ENCODE measurements at regions of chr12 and their contacts with region 1.

Region 1: GRCh38 chr12:14417715-14418114 is 52.2 kb downstream of the ATF7IP start:
- DNase-seq: peak; percentile 34 to 91 (median 62)
- ATAC-seq: peak; percentile 65
- H3K4me3 ChIP-seq: peak overlapping the region; percentile 33
- H3K4me3 Mint-ChIP-seq: peak overlapping the region; percentile 82
- H3K27ac ChIP-seq: peak overlapping the region; percentile 5 to 52
- H3K27ac Mint-ChIP-seq: peak overlapping the region; percentile 75
- H3K4me1 ChIP-seq: peaks cover 16% of the 10 kb centered on the region
- H3K4me1 Mint-ChIP-seq: peaks cover 62% of the 10 kb centered on the region
- H3K27me3 ChIP-seq: no peaks in the 10 kb centered on the region
- H3K27me3 Mint-ChIP-seq: no peaks in the 10 kb centered on the region
- CTCF ChIP-seq: no peak

Region 2: DNA sequence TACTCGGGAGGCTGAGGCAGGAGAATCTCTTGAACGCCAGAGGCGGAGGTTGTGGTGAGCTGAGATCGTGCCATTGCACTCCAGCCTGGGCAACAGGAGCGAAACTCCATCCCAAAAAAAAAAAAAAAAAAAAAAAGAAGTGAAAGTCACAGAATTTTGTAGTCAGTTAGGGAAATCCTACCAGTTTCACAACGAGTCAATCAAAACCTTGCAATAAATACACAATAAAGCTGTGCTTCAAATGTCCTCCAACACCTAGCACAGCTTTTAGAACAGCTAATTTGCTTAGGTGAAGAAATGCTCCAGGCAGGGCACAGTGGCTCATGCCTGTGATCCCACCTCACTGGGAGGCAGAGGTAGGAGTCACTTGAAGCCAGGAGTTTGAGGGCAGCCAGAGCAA is 165.0 kb before region 1 on chr12:
- CTCF ChIA-PET with region 1: interaction called, 3 read pairs
- POLR2A ChIA-PET with region 1: interaction called, 18 read pairs
- intact Hi-C with region 1: loop called (anchors 1 to 5 kb)
- DNase-seq: no peak
- ATAC-seq: no peak
- H3K4me3 ChIP-seq: no peak overlapping the region
- H3K4me3 Mint-ChIP-seq: no peak overlapping the region
- H3K27ac ChIP-seq: no peak overlapping the region
- H3K27ac Mint-ChIP-seq: no peak overlapping the region
- H3K4me1 ChIP-seq: peaks cover 29% of the 10 kb centered on the region
- H3K4me1 Mint-ChIP-seq: peaks cover 46% of the 10 kb centered on the region
- H3K27me3 ChIP-seq: no peaks in the 10 kb centered on the region
- H3K27me3 Mint-ChIP-seq: no peaks in the 10 kb centered on the region
- CTCF ChIP-seq: no peak

Region 3: DNA sequence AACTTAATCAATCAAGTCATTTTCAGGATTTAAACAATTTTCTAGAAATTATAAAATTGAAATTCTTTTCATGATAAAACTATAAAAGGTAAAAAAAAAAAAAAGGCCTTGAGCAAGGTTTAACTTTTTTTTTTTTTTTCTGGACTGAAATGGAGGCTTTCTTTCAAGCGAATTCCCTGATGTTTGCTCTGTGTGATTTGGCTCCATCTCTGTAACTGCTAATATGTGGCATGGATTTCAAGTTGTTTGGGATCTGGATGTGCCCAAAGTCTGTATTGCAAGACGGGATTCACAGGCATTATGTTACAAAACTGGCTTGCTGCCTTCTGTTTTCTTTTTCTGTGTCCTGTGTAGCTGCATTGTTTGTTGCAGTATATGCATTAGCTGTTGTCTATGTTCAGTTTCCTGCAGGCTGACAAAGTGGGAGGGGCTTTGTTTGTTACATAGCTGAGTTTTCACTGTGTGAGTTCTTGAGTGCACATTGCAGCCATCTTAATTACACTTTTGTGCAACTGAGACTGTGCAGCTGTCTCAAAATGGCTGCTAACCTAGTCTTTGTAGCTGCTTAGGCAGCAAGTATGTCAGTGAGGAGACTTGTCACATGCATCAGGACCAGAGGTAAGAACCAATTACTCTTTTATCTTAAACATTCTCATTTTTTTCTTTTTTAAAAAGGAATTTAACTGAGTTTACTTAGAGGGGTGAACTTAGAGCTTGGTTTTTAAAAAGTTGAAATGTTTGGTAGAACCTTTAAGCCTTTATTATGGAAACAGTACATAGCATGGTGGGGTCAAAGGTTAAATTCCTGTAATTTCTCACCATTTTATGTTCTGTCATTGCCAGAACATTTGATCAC is 32.7 kb before region 1 on chr12:
- CTCF ChIA-PET with region 1: interaction called, 9 read pairs
- POLR2A ChIA-PET with region 1: interaction called, 18 read pairs
- intact Hi-C with region 1: loop called in 1 of 2 experiments (anchors 2 kb)
- DNase-seq: peak in 13 of 14 experiments; percentile 17 to 95 (median 43)
- ATAC-seq: peak; percentile 92
- H3K4me3 ChIP-seq: peak overlapping the region; percentile 48
- H3K4me3 Mint-ChIP-seq: peak overlapping the region; percentile 77
- H3K27ac ChIP-seq: peak overlapping the region; percentile 23 to 37
- H3K27ac Mint-ChIP-seq: peak overlapping the region; percentile 91
- H3K4me1 ChIP-seq: peaks cover 26% of the 10 kb centered on the region
- H3K4me1 Mint-ChIP-seq: peaks cover 72% of the 10 kb centered on the region
- H3K27me3 ChIP-seq: no peaks in the 10 kb centered on the region
- H3K27me3 Mint-ChIP-seq: no peaks in the 10 kb centered on the region
- CTCF ChIP-seq: no peak

Region 4: GRCh38 chr12:14532152-14532551 is 114.4 kb after region 1 on chr12:
- CTCF ChIA-PET with region 1: no interaction called
- POLR2A ChIA-PET with region 1: no interaction called
- intact Hi-C with region 1: no loop called
- DNase-seq: no peak
- ATAC-seq: no peak
- H3K4me3 ChIP-seq: no peak overlapping the region
- H3K4me3 Mint-ChIP-seq: no peak overlapping the region
- H3K27ac ChIP-seq: no peak overlapping the region
- H3K27ac Mint-ChIP-seq: no peak overlapping the region
- H3K4me1 ChIP-seq: no peaks in the 10 kb centered on the region
- H3K4me1 Mint-ChIP-seq: no peaks in the 10 kb centered on the region
- H3K27me3 ChIP-seq: no peaks in the 10 kb centered on the region
- H3K27me3 Mint-ChIP-seq: no peaks in the 10 kb centered on the region
- CTCF ChIP-seq: no peak

Region 5: GRCh38 chr12:14664510-14664909 is 246.8 kb after region 1 on chr12:
- CTCF ChIA-PET with region 1: no interaction called
- POLR2A ChIA-PET with region 1: no interaction called
- intact Hi-C with region 1: loop called in 1 of 2 experiments (anchors 10 kb)
- DNase-seq: peak in 10 of 14 experiments; percentile 11 to 74 (median 28)
- ATAC-seq: peak; percentile 97
- H3K4me3 ChIP-seq: no peak overlapping the region
- H3K4me3 Mint-ChIP-seq: no peak overlapping the region
- H3K27ac ChIP-seq: no peak overlapping the region
- H3K27ac Mint-ChIP-seq: no peak overlapping the region
- H3K4me1 ChIP-seq: no peaks in the 10 kb centered on the region
- H3K4me1 Mint-ChIP-seq: peaks cover 5% of the 10 kb centered on the region
- H3K27me3 ChIP-seq: peaks cover 0 to 2% of the 10 kb centered on the region in 2 experiments
- H3K27me3 Mint-ChIP-seq: peaks cover 6% of the 10 kb centered on the region
- CTCF ChIP-seq: peak; percentile 77

Measured in CD4-positive, alpha-beta T cell (primary cell).